ENCODE measurements at regions of chr7 and their contacts with region 1.

Region 1: DNA sequence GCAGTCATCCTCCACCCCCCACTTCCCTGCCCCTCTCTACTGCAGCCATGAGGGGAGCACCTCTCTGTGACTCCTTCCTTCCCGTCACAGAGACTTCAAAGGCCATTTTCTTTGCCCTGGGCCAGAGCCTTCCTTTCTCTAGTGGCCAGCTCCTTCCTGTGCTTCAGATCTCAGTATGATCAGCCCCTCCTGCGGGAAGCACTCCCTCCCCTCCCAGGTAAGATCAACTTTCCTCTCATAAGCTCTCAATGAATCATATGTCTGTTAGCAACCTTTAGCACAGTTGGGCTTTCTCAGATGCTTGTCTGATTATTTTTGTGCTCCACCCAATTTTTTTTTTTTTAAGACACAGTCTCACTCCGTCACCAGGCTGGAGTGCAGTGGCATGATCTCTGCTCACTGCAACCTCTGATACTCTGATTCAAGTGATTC is 241.0 kb upstream of the PRSS1 start:
- DNase-seq: peak; percentile 21
- H3K4me3 Mint-ChIP-seq: no peak overlapping the region
- H3K27ac Mint-ChIP-seq: peak overlapping the region; percentile 52
- H3K4me1 Mint-ChIP-seq: peaks cover 6% of the 10 kb centered on the region
- H3K27me3 Mint-ChIP-seq: peaks cover 11% of the 10 kb centered on the region
- CTCF ChIP-seq: no peak

Region 2: DNA sequence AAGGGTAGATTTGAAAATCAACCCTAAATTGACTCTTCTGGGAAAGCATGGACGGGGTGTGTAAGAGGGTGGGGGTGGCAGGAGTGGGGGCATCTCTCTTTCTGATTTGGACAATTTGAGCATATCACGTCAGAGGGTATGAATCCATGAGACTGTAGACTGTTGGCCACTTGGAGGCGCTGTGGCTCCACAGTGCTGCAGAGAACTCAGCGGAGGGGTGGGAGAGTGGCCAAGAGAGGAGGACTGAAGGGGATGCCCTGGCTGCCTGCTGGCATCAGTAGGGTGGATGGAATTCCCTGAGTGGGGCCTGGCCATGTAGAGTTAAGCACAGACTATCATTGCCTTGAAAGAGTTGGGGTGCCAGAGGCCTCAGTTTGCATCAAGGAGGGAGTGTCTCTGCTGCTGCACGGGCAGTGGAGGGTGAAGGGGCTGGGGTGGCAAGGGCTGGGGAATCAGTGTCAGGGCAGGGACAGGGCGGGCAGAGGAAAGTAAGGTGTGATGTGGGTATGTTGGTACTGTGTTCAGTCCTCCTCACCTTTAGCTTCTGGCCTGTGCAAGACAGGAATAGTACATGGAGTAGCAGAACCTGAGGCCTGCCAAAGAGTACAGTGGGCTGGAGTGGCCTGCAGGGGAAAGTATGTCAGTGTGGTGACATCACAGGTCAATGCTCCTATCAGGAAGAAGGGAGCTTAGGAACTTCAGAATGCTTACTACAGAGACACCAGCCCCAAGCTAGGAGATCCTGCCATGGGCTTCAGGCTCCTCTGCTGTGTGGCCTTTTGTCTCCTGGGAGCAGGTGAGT is 116.9 kb before region 1 on chr7:
- CTCF ChIA-PET with region 1: no interaction called
- POLR2A ChIA-PET with region 1: no interaction called
- intact Hi-C with region 1: no loop called
- DNase-seq: peak; percentile 32
- H3K4me3 Mint-ChIP-seq: no peak overlapping the region
- H3K27ac Mint-ChIP-seq: no peak overlapping the region
- H3K4me1 Mint-ChIP-seq: no peaks in the 10 kb centered on the region
- H3K27me3 Mint-ChIP-seq: peaks cover 9% of the 10 kb centered on the region
- CTCF ChIP-seq: peak; percentile 20

Region 3: GRCh38 chr7:142471820-142472219 is 36.5 kb before region 1 on chr7:
- CTCF ChIA-PET with region 1: interaction called, 261 read pairs
- POLR2A ChIA-PET with region 1: no interaction called
- intact Hi-C with region 1: loop called (anchors 1 kb)
- DNase-seq: no peak
- H3K4me3 Mint-ChIP-seq: no peak overlapping the region
- H3K27ac Mint-ChIP-seq: no peak overlapping the region
- H3K4me1 Mint-ChIP-seq: peaks cover 9% of the 10 kb centered on the region
- H3K27me3 Mint-ChIP-seq: peaks cover 12% of the 10 kb centered on the region
- CTCF ChIP-seq: no peak

Region 4: DNA sequence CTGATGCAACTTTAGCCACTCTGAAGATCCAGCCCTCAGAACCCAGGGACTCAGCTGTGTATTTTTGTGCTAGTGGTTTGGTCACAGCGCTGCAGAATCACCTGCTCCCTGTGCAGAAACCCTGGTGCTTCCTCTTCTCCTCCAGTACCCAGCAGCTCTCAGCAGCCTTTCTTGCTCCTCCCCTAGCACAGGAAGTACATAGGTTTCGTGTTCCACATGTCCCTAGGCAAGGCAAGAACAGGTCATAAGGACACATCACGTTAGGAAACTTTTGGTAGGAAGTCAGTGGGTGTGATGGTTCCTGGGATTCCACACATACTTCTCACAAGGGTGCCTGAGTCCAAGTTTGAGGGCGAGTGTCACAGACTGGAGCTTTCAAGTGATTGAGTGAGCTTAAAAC is 73.1 kb after region 1 on chr7:
- CTCF ChIA-PET with region 1: no interaction called
- POLR2A ChIA-PET with region 1: no interaction called
- intact Hi-C with region 1: no loop called
- DNase-seq: peak; percentile 62
- H3K4me3 Mint-ChIP-seq: no peak overlapping the region
- H3K27ac Mint-ChIP-seq: no peak overlapping the region
- H3K4me1 Mint-ChIP-seq: peaks cover 17% of the 10 kb centered on the region
- H3K27me3 Mint-ChIP-seq: no peaks in the 10 kb centered on the region
- CTCF ChIP-seq: no peak

Region 5: DNA sequence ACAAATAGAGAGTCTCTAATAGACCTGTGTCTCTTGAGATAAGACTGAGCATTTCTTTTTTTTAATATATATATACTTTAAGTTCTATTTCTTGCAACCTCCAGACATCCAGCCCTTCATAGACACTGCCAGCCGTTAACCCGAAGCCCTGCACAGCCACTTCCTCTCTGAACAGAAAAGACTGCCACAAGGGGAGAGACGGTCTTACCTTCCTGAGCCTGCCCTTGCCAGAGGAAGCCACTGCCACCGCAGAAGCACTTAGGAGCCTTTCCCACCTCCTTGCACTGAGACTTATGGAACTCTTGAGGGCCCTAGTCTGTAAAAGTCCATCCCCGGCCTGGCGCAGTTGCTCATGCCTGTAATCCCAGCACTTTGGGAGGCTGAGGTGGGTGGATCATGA is 209.2 kb after region 1 on chr7:
- CTCF ChIA-PET with region 1: no interaction called
- POLR2A ChIA-PET with region 1: no interaction called
- intact Hi-C with region 1: no loop called
- DNase-seq: no peak
- H3K4me3 Mint-ChIP-seq: no peak overlapping the region
- H3K27ac Mint-ChIP-seq: no peak overlapping the region
- H3K4me1 Mint-ChIP-seq: no peaks in the 10 kb centered on the region
- H3K27me3 Mint-ChIP-seq: peaks cover 69% of the 10 kb centered on the region
- CTCF ChIP-seq: no peak

Region 6: GRCh38 chr7:142796608-142797385 is 288.5 kb after region 1 on chr7:
- CTCF ChIA-PET with region 1: no interaction called
- POLR2A ChIA-PET with region 1: no interaction called
- intact Hi-C with region 1: no loop called
- DNase-seq: no peak
- H3K4me3 Mint-ChIP-seq: no peak overlapping the region
- H3K27ac Mint-ChIP-seq: no peak overlapping the region
- H3K4me1 Mint-ChIP-seq: peaks cover 11% of the 10 kb centered on the region
- H3K27me3 Mint-ChIP-seq: peaks cover 77% of the 10 kb centered on the region
- CTCF ChIP-seq: no peak